Ovary (tissue), 10 donors: ENCODE measurements at regions of chr12 and their contacts with region 1.

Region 1: GRCh38 chr12:31603546-31604009 is 12.6 kb upstream of the DENND5B start:
- DNase-seq: no peak
- H3K4me3 ChIP-seq: no peak overlapping the region
- H3K27ac ChIP-seq: no peak overlapping the region
- H3K4me1 ChIP-seq: no peaks in the 10 kb centered on the region
- H3K27me3 ChIP-seq: no peaks in the 10 kb centered on the region
- CTCF ChIP-seq: no peak
- EP300 ChIP-seq: no peak
- POLR2A ChIP-seq: no peak

Region 2: DNA sequence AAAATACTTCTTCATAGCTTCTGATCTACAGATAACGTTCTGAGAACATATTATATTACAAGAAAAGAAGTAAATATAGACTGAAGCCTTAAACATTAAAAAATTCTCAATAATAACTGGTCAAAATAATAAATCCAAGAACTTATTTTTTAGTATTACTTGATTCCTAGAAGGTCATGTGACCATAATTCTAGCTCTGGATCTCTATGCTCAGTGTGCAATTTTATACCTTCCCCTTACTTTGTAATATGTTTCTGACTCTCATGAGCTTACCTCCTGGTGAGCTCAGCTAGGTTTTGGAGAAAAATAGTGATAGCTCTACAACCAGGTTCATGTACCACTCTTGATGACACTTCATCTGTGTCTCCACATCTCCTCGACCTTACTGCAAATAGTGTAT is 1816.2 kb after region 1 on chr12:
- intact Hi-C with region 1: loop called in 1 of 4 experiments (anchors 5 kb)
- DNase-seq: no peak
- H3K4me3 ChIP-seq: no peak overlapping the region
- H3K27ac ChIP-seq: no peak overlapping the region
- H3K4me1 ChIP-seq: no peaks in the 10 kb centered on the region
- H3K27me3 ChIP-seq: no peaks in the 10 kb centered on the region
- CTCF ChIP-seq: no peak
- EP300 ChIP-seq: no peak
- POLR2A ChIP-seq: no peak